ENCODE measurements at regions of chr17 and their contacts with region 1.

Region 1: DNA sequence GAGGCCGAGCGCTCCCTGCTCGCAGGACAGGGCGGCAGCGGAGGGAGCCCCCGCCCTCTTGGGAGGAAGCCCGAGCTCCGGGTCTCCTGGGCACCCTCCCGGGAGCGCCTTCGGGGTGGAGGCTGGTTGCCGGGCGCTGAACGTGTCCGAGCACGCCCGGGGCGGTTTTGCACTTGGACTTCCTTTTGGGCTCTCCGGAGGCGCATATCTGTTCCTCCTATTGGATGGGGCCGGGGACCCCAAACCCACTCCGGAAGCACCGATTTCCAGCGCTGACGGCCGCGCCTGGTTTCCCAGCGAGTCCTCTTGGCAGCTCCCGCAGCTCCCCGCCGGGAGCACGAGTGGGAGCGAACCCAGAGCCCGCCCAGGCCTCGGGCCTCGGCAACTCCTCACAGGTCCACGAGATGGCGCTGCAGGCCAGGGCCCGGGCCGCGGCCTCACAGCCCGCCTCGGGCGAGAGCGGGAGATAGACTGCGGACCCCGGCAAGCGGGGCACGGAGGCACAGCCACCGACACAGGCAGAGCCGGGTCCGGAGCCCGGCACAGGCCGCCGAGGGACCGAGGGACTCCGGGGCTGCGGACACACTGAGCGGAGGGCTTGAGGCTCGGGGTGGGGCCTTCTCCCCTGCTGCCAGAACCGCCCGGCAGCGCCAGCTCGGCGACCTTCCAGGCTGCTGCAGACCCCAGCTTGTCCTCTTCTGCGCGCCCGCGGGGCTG is 12.7 kb downstream of the TBX2 start:
- DNase-seq: peak; percentile 84
- ATAC-seq: peak; percentile 76
- H3K4me3 Mint-ChIP-seq: peak overlapping the region; percentile 74
- H3K27ac Mint-ChIP-seq: no peak overlapping the region
- H3K4me1 Mint-ChIP-seq: peaks cover 35% of the 10 kb centered on the region
- H3K27me3 Mint-ChIP-seq: peaks cover 29% of the 10 kb centered on the region
- CTCF ChIP-seq: peak; percentile 67

Region 2: GRCh38 chr17:60720763-60721531 is 691.4 kb before region 1 on chr17:
- CTCF ChIA-PET with region 1: interaction called, 6 read pairs
- POLR2A ChIA-PET with region 1: no interaction called
- intact Hi-C with region 1: loop called (anchors 2 kb)
- DNase-seq: no peak
- ATAC-seq: no peak
- H3K4me3 Mint-ChIP-seq: no peak overlapping the region
- H3K27ac Mint-ChIP-seq: no peak overlapping the region
- H3K4me1 Mint-ChIP-seq: peaks cover 17% of the 10 kb centered on the region
- H3K27me3 Mint-ChIP-seq: no peaks in the 10 kb centered on the region
- CTCF ChIP-seq: peak; percentile 87

Region 3: DNA sequence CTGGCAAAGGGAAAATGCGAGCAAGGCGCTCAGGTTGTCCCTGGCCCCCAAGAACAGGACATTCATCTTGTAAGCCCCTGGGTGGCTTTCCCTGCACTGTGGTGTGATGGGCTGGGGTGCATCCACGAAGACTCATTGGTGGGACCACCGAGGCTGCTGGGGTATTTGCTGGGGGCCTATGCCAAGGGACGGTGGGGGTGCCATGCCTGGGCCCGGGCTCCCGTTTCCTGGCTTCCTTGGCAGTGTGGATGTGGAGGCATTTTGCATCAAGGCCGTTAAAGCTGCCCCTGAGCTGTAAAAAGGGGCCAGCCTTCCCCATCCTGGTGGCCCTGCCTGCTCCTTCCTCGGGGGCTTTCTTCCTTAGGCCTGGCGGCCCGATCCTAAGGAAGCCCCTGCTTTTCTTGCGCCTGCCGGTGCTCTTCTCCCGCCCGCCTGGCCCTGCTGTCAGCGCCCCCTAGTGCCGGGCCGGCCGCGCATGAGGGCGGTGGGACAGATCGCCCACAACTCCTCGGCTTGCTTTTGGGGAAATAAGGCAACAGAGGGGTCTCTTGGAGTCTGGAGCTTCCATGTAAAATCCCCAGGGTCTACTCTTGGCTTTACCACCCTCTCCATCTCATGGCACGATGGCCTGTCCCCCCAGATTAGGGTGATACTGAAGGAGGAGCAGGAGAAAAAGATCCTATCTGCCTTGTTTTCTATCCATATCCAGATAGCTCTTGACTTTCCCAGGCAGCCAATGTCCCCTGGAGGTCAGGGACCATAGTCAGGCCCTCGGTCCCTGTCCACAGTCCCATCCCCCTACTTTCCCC is 22.4 kb before region 1 on chr17:
- CTCF ChIA-PET with region 1: interaction called, 4 read pairs
- POLR2A ChIA-PET with region 1: no interaction called
- intact Hi-C with region 1: loop called (anchors 2 kb)
- DNase-seq: no peak
- ATAC-seq: peak; percentile 34
- H3K4me3 Mint-ChIP-seq: no peak overlapping the region
- H3K27ac Mint-ChIP-seq: no peak overlapping the region
- H3K4me1 Mint-ChIP-seq: peaks cover 2% of the 10 kb centered on the region
- H3K27me3 Mint-ChIP-seq: peaks cover 19% of the 10 kb centered on the region
- CTCF ChIP-seq: no peak

Region 4: GRCh38 chr17:61551255-61551742 is 139.0 kb after region 1 on chr17:
- CTCF ChIA-PET with region 1: interaction called, 3 read pairs
- POLR2A ChIA-PET with region 1: no interaction called
- intact Hi-C with region 1: loop called (anchors 1 kb)
- DNase-seq: no peak
- ATAC-seq: no peak
- H3K4me3 Mint-ChIP-seq: no peak overlapping the region
- H3K27ac Mint-ChIP-seq: no peak overlapping the region
- H3K4me1 Mint-ChIP-seq: no peaks in the 10 kb centered on the region
- H3K27me3 Mint-ChIP-seq: peaks cover 24% of the 10 kb centered on the region
- CTCF ChIP-seq: no peak

Region 5: GRCh38 chr17:61837175-61838051 is 425.1 kb after region 1 on chr17:
- CTCF ChIA-PET with region 1: interaction called, 11 read pairs
- POLR2A ChIA-PET with region 1: no interaction called
- intact Hi-C with region 1: loop called (anchors 1 kb)
- DNase-seq: peak; percentile 22
- ATAC-seq: peak; percentile 62
- H3K4me3 Mint-ChIP-seq: no peak overlapping the region
- H3K27ac Mint-ChIP-seq: no peak overlapping the region
- H3K4me1 Mint-ChIP-seq: no peaks in the 10 kb centered on the region
- H3K27me3 Mint-ChIP-seq: no peaks in the 10 kb centered on the region
- CTCF ChIP-seq: peak; percentile 94

Region 6: GRCh38 chr17:62109378-62109902 is 697.1 kb after region 1 on chr17:
- CTCF ChIA-PET with region 1: no interaction called
- POLR2A ChIA-PET with region 1: no interaction called
- intact Hi-C with region 1: loop called (anchors 1 kb)
- DNase-seq: peak; percentile 43
- ATAC-seq: peak; percentile 100
- H3K4me3 Mint-ChIP-seq: no peak overlapping the region
- H3K27ac Mint-ChIP-seq: no peak overlapping the region
- H3K4me1 Mint-ChIP-seq: peaks cover 3% of the 10 kb centered on the region
- H3K27me3 Mint-ChIP-seq: no peaks in the 10 kb centered on the region
- CTCF ChIP-seq: no peak